Activated CD4-positive, alpha-beta T cell treated with anti-CD3 and anti-CD28 coated beads, Interleukin-2, amount 10 ng/mL, durations not matched to agents 24 days and 14 days (primary cell): ENCODE measurements at regions of chr5 and their contacts with region 1.

Region 1: DNA sequence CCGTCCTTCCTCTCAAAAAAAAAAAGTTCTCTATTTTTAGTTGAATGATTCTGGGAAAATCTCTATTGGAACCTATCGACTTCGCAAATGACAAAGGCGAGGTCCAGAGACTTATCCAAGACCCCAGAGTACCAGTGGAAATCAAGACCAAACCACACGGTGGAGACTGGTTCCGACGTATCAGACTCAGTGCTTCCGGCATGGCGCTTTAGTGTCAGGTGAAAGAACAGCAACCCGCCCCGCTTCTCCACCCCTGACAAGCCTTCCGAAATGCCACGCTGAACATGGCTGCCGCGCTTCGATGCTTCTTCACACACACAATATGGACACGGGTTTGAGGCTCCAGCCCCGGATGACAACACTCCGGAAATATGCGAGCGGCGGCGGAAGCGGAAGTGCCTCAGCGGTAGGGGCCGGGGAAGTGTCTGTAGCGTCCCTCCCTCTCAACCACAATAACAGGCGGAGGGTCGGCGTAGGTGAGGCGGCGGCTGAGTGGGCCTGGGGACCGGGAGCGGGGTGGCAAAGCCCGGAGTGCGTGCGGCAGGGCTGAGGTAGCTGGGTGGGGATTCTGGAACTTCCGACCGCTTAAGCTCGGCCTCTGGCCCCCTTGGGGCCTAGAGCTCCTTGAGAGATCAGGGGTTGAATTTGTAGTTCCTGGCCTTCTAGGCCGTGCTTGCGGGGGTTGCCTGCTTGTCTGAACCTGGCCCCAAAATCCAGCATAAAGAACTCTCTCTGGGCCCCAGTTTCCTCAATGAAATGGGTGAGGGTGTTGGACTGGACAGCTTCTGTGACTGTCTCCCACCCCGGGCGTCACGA is at the start of gene FBXO38:
- DNase-seq: peak; percentile 99
- H3K4me3 Mint-ChIP-seq: peak within 1 kb of the TSS; percentile 91
- H3K27ac Mint-ChIP-seq: peak within 1 kb of the TSS; percentile 95
- H3K4me1 Mint-ChIP-seq: peaks cover 51% of the 10 kb centered on the region
- H3K27me3 Mint-ChIP-seq: no peaks in the 10 kb centered on the region
- total RNA-seq, gene FBXO38: 57.3 and 62.9 TPM in 2 replicates

Region 2: GRCh38 chr5:147539053-147539452 is 844.7 kb before region 1 on chr5:
- intact Hi-C with region 1: no loop called
- DNase-seq: no peak
- H3K4me3 Mint-ChIP-seq: no peak overlapping the region
- H3K27ac Mint-ChIP-seq: no peak overlapping the region
- H3K4me1 Mint-ChIP-seq: no peaks in the 10 kb centered on the region
- H3K27me3 Mint-ChIP-seq: no peaks in the 10 kb centered on the region

Region 3: DNA sequence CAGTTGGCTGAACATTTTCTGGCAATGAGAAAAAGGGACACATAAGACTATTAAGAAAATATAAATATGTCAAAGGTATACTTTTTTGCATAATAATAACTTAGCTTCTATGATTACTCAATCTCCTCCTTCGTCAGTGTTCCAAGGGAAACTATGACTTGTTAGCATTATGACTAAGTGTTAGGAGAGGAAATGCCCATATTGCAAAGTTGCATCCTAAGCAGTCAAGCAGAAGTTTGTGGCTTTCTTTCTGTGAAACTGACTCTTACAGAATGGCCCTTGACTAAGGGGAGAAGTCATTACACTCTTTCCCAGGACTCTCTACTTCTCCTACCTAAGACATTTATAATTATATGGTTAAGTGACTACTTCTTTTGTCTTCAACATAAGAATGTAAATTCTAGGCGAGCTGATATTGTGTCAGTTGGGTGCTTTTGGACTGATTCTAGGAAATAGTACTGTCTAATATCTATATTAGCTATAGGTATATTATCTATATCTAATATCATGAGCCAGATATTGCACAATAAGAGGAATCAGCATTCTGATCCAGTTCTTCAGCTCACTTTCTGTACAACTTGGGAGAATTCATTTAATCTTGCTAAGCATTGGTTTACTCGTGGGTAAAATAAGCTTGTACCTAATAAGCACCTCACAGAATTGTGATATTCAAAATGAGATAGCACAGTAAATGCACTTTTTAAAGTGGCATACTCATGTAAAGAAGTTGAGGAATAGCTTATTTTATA is 197.3 kb before region 1 on chr5:
- intact Hi-C with region 1: loop called (anchors 1 kb)
- DNase-seq: peak; percentile 61
- H3K4me3 Mint-ChIP-seq: no peak overlapping the region
- H3K27ac Mint-ChIP-seq: no peak overlapping the region
- H3K4me1 Mint-ChIP-seq: peaks cover 6% of the 10 kb centered on the region
- H3K27me3 Mint-ChIP-seq: peaks cover 8% of the 10 kb centered on the region

Region 4: GRCh38 chr5:148397968-148398597 is 14.3 kb after region 1 on chr5:
- intact Hi-C with region 1: loop called (anchors 2 kb)
- DNase-seq: no peak
- H3K4me3 Mint-ChIP-seq: no peak overlapping the region
- H3K27ac Mint-ChIP-seq: peak overlapping the region; percentile 4
- H3K4me1 Mint-ChIP-seq: peaks cover 33% of the 10 kb centered on the region
- H3K27me3 Mint-ChIP-seq: no peaks in the 10 kb centered on the region

Region 5: GRCh38 chr5:148620696-148621095 is 236.9 kb after region 1 on chr5:
- intact Hi-C with region 1: loop called (anchors 5 kb)
- DNase-seq: peak; percentile 81
- H3K4me3 Mint-ChIP-seq: peak overlapping the region; percentile 10
- H3K27ac Mint-ChIP-seq: peak overlapping the region; percentile 55
- H3K4me1 Mint-ChIP-seq: peaks cover 25% of the 10 kb centered on the region
- H3K27me3 Mint-ChIP-seq: peaks cover 36% of the 10 kb centered on the region

Region 6: DNA sequence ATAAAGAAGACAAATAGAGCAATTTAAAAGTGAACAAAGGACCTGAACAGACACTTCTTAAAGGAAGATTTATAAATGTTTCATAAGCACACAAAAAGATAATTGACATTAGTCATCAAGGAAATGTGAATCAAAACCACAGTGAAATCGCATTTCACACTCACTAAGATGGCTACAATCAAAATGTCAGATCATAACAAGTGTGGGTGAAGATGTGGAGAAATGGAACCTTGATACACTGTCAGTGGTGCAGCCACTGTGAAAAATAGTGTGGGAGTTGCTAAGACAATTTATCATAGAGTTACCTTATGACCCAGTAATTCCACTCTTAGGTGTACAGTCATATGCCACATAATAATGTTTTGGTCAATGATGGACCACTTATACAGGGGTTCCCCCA is 325.1 kb after region 1 on chr5:
- intact Hi-C with region 1: loop called (anchors 10 kb)
- DNase-seq: no peak
- H3K4me3 Mint-ChIP-seq: no peak overlapping the region
- H3K27ac Mint-ChIP-seq: no peak overlapping the region
- H3K4me1 Mint-ChIP-seq: peaks cover 19% of the 10 kb centered on the region
- H3K27me3 Mint-ChIP-seq: peaks cover 5% of the 10 kb centered on the region

Region 7: DNA sequence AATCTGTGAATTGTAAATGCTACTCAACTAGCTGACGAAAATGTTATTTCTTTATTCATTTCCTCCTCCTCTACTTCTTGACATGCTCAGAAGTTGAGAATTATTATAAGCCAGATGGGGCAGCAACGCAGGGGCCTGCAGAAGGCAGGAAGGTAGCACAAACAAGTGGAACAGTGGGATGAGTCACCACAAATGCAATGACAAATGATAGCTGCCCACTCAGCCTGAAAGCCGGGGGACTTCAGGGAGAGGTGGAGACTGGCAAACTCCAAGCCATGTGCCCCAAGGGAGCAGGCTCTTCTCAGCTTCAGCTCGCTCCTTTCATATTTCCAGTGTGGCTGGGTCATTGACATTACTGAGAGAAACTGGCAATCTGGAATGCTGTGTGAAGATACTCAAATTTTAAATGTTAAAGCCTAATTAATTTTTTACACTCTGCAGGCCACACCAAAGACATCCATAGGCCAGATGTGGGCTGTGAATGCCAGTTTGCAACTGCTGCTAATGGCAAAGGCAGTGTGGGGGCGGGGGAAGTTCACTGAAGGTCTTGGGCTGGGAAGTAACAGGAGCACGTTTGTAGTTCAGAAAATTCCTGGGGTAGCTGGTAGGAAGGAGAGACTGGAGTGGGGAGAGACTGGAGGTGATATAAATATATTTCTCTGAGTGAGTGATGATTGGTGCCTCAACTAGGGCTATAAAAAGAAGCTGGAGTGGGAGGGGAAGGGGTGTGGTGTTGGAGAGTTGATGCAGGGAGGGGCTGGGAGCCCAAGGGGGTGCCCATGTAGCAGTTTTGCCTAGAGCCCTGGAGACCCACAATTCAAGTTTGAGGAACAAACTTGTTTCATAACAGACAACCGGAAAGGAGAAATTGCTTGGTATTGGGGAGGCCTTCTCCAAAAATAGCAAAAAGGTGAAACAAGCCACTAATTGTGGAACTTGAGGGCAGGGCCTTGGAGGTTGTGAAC is 421.8 kb after region 1 on chr5:
- intact Hi-C with region 1: loop called (anchors 5 kb)
- DNase-seq: no peak
- H3K4me3 Mint-ChIP-seq: peak overlapping the region; percentile 60
- H3K27ac Mint-ChIP-seq: peak overlapping the region; percentile 88
- H3K4me1 Mint-ChIP-seq: peaks cover 47% of the 10 kb centered on the region
- H3K27me3 Mint-ChIP-seq: peaks cover 11% of the 10 kb centered on the region

Region 8: GRCh38 chr5:149345147-149345875 is 961.5 kb after region 1 on chr5 and contains the start of gene GRPEL2:
- intact Hi-C with region 1: loop called (anchors 1 kb)
- DNase-seq: peak; percentile 97
- H3K4me3 Mint-ChIP-seq: peak within 1 kb of the TSS; percentile 96
- H3K27ac Mint-ChIP-seq: peak within 1 kb of the TSS; percentile 97
- H3K4me1 Mint-ChIP-seq: peaks cover 46% of the 10 kb centered on the region
- H3K27me3 Mint-ChIP-seq: peaks cover 1% of the 10 kb centered on the region
- total RNA-seq, gene GRPEL2: 30.6 and 30.7 TPM in 2 replicates